K562 (cell line): ENCODE measurements at regions of chr10 and their contacts with region 1.

Region 1: GRCh38 chr10:78047314-78047891 is 13.7 kb downstream of the RPS24 start:
- DNase-seq: peak; percentile 75 to 88 (median 77)
- ATAC-seq: peak; percentile 83
- H3K4me3 ChIP-seq: no peak overlapping the region
- H3K27ac ChIP-seq: no peak overlapping the region
- H3K4me1 ChIP-seq: peaks cover 0 to 17% of the 10 kb centered on the region in 2 experiments; a peak in 2 of 5 replicates
- H3K27me3 ChIP-seq: peaks cover 0 to under 1% of the 10 kb centered on the region in 2 experiments; a peak in 2 of 5 replicates
- CTCF ChIP-seq: peak; percentile 95 to 98 (median 95)
- EP300 ChIP-seq: no peak
- POLR2A ChIP-seq: no peak
- RAD21 ChIP-seq: peak; percentile 89 to 95

Region 2: GRCh38 chr10:78035025-78035424 is 12.4 kb before region 1 on chr10:
- CTCF ChIA-PET with region 1: no interaction called
- POLR2A ChIA-PET with region 1: interaction called, 23 read pairs
- in situ Hi-C with region 1: no loop called
- intact Hi-C with region 1: no loop called
- DNase-seq: no peak
- ATAC-seq: no peak
- H3K4me3 ChIP-seq: peak overlapping the region; percentile 72
- H3K27ac ChIP-seq: peak overlapping the region; percentile 82
- H3K4me1 ChIP-seq: peaks cover 18 to 40% of the 10 kb centered on the region in 2 experiments
- H3K27me3 ChIP-seq: no peaks in the 10 kb centered on the region
- CTCF ChIP-seq: no peak
- EP300 ChIP-seq: no peak
- POLR2A ChIP-seq: no peak
- RAD21 ChIP-seq: no peak

Region 3: GRCh38 chr10:78165617-78166016 is 118.2 kb after region 1 on chr10:
- CTCF ChIA-PET with region 1: no interaction called
- POLR2A ChIA-PET with region 1: no interaction called
- in situ Hi-C with region 1: no loop called
- intact Hi-C with region 1: loop called (anchors 5 kb)
- DNase-seq: no peak
- ATAC-seq: no peak; the same call in 2 of the 3 replicates
- H3K4me3 ChIP-seq: no peak overlapping the region
- H3K27ac ChIP-seq: no peak overlapping the region
- H3K4me1 ChIP-seq: no peaks in the 10 kb centered on the region
- H3K27me3 ChIP-seq: peaks cover 2 to 27% of the 10 kb centered on the region in 2 experiments; a peak in 3 of 5 replicates
- CTCF ChIP-seq: peak; percentile 18 to 31 (median 21); a peak in 1 of 6 replicates
- EP300 ChIP-seq: no peak
- POLR2A ChIP-seq: no peak
- RAD21 ChIP-seq: peak in 1 of 2 experiments; percentile 40; a peak in 2 of 4 replicates

Region 4: DNA sequence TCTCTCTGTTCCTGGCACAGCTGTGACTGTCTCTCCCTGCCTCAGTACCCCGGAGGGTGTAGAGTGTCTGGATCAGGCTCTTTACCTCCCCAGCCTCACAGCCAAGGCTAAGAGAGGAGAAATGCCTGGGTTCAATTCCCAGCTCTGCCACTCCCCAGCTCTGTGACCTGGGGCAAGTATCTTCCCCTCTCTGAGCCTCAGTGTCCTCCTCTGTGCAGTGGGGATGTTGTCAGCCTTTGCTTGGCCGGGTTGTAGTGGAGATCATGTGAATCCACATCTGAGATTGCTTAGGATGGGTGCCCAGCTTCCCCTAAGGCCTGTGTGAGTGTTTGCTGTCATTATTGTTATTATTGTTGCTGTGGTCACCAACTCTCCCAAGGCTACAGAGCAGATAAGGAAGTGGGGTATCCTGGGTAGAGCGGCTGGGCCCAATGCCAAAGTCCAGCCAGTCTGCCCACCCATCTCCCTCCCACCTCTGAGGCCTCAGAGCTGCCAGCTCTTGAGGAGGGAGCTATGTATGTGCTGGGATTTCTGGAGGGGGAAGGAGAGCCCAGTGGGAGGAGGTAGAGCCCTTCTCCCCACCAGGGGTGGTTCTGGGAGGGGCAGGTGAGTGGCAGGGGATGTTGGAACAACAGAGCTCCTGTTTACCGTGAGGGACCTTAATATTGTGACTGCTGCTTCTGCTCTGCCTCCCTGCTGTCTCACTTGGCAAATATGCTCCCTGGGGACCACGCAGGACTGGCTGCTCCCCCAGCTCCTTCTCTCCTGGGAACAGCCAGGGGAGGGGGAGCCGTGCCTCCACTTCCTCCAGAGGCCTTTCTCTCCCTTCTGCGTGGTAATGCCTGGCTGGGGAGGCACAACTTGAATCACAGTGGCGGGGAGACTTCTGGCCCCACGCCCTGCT is 156.8 kb after region 1 on chr10:
- CTCF ChIA-PET with region 1: no interaction called
- POLR2A ChIA-PET with region 1: no interaction called
- in situ Hi-C with region 1: no loop called
- intact Hi-C with region 1: loop called (anchors 10 kb)
- DNase-seq: no peak
- ATAC-seq: no peak
- H3K4me3 ChIP-seq: no peak overlapping the region
- H3K27ac ChIP-seq: no peak overlapping the region
- H3K4me1 ChIP-seq: no peaks in the 10 kb centered on the region
- H3K27me3 ChIP-seq: peaks cover 0 to 35% of the 10 kb centered on the region in 2 experiments; a peak in 2 of 5 replicates
- CTCF ChIP-seq: no peak
- EP300 ChIP-seq: no peak
- POLR2A ChIP-seq: no peak
- RAD21 ChIP-seq: no peak